Activated CD4-positive, alpha-beta memory T cell treated with anti-CD3 and anti-CD28 coated beads for 36 hours (primary cell): ENCODE measurements at regions of chr19 and their contacts with region 1.

Region 1: DNA sequence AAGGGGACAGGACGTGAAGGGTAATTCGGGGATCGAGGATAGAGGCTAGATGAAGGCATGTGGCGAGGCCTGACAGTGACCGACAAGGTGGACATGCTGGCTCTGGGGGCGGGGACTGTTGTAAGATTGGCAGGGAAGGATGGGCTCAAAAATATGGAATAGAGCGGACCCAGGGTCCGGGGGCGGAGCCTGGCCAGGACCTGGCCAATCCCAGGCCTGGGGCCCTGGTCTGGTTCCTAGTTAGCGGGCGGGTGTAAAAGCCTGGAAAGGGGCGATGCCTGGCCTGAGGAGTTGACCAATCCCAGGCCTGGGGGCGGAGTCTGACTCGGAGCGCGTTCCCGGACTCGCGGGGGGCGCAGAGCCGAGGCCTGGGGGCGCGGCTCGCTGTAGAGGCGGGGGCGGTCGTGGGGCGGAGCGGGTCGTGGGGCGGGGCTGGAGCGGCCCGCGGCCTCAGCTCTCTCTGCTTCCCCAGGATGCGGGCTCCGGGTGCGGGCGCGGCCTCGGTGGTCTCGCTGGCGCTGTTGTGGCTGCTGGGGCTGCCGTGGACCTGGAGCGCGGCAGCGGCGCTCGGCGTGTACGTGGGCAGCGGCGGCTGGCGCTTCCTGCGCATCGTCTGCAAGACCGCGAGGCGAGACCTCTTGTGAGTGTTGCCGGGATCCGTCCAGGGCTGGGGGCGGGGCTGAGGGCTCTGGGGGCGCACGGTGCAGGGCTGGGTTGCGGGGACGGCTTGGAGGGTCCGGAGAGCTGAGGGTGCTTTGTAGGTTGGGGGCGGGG is at the start of gene SLC27A1:
- DNase-seq: peak; percentile 93
- H3K4me3 Mint-ChIP-seq: peak within 1 kb of the TSS; percentile 90
- H3K27ac Mint-ChIP-seq: peak within 1 kb of the TSS; percentile 76
- H3K4me1 Mint-ChIP-seq: peaks cover 25% of the 10 kb centered on the region
- H3K27me3 Mint-ChIP-seq: no peaks in the 10 kb centered on the region
- total RNA-seq, gene SLC27A1: 4.5 to 4.8 TPM

Region 2: DNA sequence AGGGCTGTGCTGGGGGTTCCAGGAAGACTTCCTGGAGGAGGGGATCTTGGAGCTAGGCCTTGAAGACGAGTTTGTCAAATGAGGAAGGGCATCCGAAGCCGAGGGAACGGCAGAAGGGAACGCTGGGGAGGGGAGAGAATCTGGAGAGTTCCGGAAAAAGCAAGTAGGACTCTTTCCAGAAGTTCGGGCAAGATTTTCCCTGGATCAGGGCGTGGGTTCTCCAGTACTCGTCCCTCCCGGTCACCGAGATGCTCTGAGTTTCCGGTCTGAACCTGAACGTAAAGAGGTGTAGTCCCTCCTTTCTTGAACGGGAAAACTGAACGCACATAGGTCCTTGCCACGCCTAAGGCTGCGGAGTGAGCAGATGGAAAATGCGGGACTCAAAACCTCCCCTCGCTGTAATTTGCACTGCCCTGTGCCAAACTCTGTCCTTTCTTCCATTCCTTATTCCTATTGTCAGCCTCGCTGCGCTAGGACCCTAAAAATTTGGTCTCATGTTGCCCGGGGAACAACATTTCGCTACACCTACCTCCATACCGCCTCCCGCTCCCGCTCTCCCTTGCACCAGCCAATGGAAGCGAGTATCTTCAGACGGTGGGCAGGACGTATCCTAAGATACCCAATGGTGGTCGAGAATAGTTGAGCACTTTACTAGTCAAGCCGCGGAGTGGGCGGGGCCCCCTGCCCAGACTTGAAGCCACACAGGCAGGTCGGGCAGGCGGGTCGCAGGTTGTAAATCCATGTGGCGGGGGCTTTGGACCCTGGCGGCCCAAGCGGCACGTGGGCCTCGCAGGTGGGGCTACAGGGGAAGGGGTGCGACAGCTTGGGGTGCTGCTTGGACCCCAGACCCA is 133.2 kb before region 1 on chr19 and contains the start of gene GTPBP3:
- CTCF ChIA-PET with region 1: no interaction called
- POLR2A ChIA-PET with region 1: no interaction called
- intact Hi-C with region 1: loop called (anchors 5 kb)
- DNase-seq: peak; percentile 98
- H3K4me3 Mint-ChIP-seq: peak within 1 kb of the TSS; percentile 93
- H3K27ac Mint-ChIP-seq: peak within 1 kb of the TSS; percentile 93
- H3K4me1 Mint-ChIP-seq: peaks cover 28% of the 10 kb centered on the region
- H3K27me3 Mint-ChIP-seq: no peaks in the 10 kb centered on the region
- total RNA-seq, gene GTPBP3: 37.7 to 41.4 TPM

Region 3: GRCh38 chr19:17405250-17406038 is 64.8 kb before region 1 on chr19 and contains the start of gene BST2:
- CTCF ChIA-PET with region 1: interaction called, 7 read pairs
- POLR2A ChIA-PET with region 1: interaction called, 3 read pairs
- intact Hi-C with region 1: loop called (anchors 2 kb)
- DNase-seq: peak; percentile 71
- H3K4me3 Mint-ChIP-seq: peak within 1 kb of the TSS; percentile 93
- H3K27ac Mint-ChIP-seq: peak within 1 kb of the TSS; percentile 97
- H3K4me1 Mint-ChIP-seq: peaks cover 26% of the 10 kb centered on the region
- H3K27me3 Mint-ChIP-seq: no peaks in the 10 kb centered on the region
- total RNA-seq, gene BST2: 156 to 164 TPM

Region 4: GRCh38 chr19:17450264-17451075 is 19.8 kb before region 1 on chr19:
- CTCF ChIA-PET with region 1: interaction called, 9 read pairs
- POLR2A ChIA-PET with region 1: no interaction called
- intact Hi-C with region 1: loop called (anchors 1 kb)
- DNase-seq: peak; percentile 73
- H3K4me3 Mint-ChIP-seq: peak overlapping the region; percentile 28
- H3K27ac Mint-ChIP-seq: peak overlapping the region; percentile 11
- H3K4me1 Mint-ChIP-seq: peaks cover 16% of the 10 kb centered on the region
- H3K27me3 Mint-ChIP-seq: peaks cover 24% of the 10 kb centered on the region

Region 5: GRCh38 chr19:17576759-17577473 is 106.7 kb after region 1 on chr19:
- CTCF ChIA-PET with region 1: interaction called, 6 read pairs
- POLR2A ChIA-PET with region 1: no interaction called
- intact Hi-C with region 1: loop called (anchors 2 kb)
- DNase-seq: peak; percentile 43
- H3K4me3 Mint-ChIP-seq: no peak overlapping the region
- H3K27ac Mint-ChIP-seq: no peak overlapping the region
- H3K4me1 Mint-ChIP-seq: no peaks in the 10 kb centered on the region
- H3K27me3 Mint-ChIP-seq: no peaks in the 10 kb centered on the region